ENCODE measurements at regions of chr17 and their contacts with region 1.

Region 1: DNA sequence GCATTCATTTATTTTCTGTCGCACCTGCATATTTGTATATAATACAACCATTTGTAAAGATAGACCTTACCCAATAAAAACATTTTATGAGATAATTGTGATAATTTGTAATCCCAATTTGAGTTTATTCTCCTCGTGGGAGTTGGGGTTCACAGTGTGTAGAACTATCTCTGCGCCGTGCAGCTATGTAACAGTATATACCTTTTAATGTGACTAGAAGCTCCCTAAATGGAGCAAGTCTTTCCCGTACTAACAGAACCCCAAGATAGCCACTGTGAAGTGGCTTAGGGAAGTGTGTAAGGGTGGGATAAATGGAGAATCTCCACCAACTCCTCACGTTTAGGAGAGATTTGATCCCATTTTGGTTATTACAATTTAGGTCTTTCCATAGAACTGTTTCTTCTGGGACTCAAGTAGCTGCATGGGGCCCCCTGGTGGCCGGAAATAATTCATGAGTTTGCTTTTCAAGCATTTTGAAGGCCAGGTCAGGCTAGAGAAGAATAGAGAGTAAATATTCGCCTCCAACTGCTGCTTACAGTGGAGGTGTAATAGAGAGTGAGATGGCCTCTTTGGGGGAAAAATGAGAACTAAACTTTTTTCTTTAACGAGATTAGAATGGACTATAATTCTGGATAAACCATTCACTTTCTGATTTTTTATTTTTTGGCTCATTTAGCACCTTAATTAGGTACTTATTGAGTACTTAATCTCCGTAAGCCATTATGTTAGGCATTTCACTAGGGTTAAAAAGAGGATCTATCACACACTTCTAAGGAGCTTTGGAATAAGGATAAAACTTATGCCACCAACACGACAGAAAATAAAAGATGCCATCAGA is 4.5 kb downstream of the TMEM100 start:
- DNase-seq: peak; percentile 38 to 54 (median 39)
- H3K4me3 ChIP-seq: no peak overlapping the region
- H3K4me3 Mint-ChIP-seq: no peak overlapping the region
- H3K27ac ChIP-seq: no peak overlapping the region
- H3K27ac Mint-ChIP-seq: no peak overlapping the region
- H3K4me1 ChIP-seq: no peaks in the 10 kb centered on the region
- H3K4me1 Mint-ChIP-seq: no peaks in the 10 kb centered on the region
- H3K27me3 ChIP-seq: no peaks in the 10 kb centered on the region
- H3K27me3 Mint-ChIP-seq: peaks cover 17 to 21% of the 10 kb centered on the region in 2 donors

Region 2: GRCh38 chr17:55341432-55341831 is 376.7 kb before region 1 on chr17:
- CTCF ChIA-PET with region 1: no interaction called
- POLR2A ChIA-PET with region 1: no interaction called
- intact Hi-C with region 1: no loop called
- DNase-seq: no peak
- H3K4me3 ChIP-seq: no peak overlapping the region
- H3K4me3 Mint-ChIP-seq: no peak overlapping the region
- H3K27ac ChIP-seq: no peak overlapping the region
- H3K27ac Mint-ChIP-seq: peak overlapping the region in 2 of 7 donors; percentile 37 to 57
- H3K4me1 ChIP-seq: peaks cover 50% of the 10 kb centered on the region
- H3K4me1 Mint-ChIP-seq: peaks cover 38 to 64% (median 47%) of the 10 kb centered on the region in 4 donors
- H3K27me3 ChIP-seq: no peaks in the 10 kb centered on the region
- H3K27me3 Mint-ChIP-seq: peaks cover 0 to 9% of the 10 kb centered on the region in 2 donors

Region 3: DNA sequence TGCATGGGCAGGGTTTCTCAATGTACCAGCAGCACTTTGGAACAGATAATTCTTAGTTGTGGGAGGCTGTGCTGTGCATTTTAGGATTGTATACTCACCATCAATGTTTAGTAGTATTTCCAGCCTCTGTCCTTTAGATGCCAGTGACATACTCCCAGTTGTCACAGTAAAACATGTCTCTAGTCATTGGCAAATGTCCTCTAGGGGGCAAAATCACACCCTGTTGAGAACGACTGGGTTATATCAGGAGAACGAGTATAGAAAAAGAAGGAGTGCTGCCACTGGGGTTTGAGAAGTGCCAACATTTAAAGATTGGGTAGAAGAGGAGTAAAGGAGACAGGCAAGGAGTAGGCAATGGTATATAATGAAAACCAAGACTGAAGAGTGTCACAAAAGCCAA is 169.0 kb before region 1 on chr17:
- CTCF ChIA-PET with region 1: no interaction called
- POLR2A ChIA-PET with region 1: no interaction called
- intact Hi-C with region 1: loop called (anchors 5 kb)
- DNase-seq: peak in 1 of 5 donors; percentile 5
- H3K4me3 ChIP-seq: no peak overlapping the region
- H3K4me3 Mint-ChIP-seq: no peak overlapping the region
- H3K27ac ChIP-seq: no peak overlapping the region
- H3K27ac Mint-ChIP-seq: no peak overlapping the region
- H3K4me1 ChIP-seq: no peaks in the 10 kb centered on the region
- H3K4me1 Mint-ChIP-seq: peaks cover 0 to 1% (median 0%) of the 10 kb centered on the region in 4 donors
- H3K27me3 ChIP-seq: no peaks in the 10 kb centered on the region
- H3K27me3 Mint-ChIP-seq: peaks cover 4 to 12% of the 10 kb centered on the region in 2 donors

Region 4: DNA sequence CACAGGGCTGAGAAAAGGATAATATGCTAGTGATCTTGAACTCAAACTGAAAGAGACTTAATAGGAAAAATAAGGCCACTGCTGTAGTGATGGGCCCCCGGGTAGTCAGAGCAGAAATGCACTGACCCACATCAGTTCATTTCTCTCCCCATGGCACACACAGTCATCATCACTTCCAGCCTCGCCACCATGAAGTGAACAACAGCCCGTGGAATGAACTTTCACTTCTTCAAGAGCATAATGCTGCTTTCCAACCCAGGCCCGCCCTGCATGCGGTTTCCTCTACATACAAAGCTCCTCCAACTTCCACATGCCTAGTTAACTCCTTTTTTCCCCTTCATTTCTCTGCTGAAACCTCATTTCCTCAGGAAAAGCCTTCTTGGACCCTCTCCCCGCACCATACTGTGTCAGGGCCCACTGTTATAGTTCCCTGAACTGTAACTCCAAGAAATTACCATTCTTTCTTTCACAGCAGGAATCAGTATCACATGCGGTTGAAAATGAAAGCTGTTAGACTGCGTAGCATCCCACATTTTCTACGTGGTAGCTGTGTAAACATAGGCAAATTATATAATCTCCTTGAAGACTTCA is 141.0 kb before region 1 on chr17:
- CTCF ChIA-PET with region 1: interaction called, 3 read pairs
- POLR2A ChIA-PET with region 1: no interaction called
- intact Hi-C with region 1: loop called (anchors 1 kb)
- DNase-seq: peak; percentile 48 to 67 (median 54)
- H3K4me3 ChIP-seq: peak overlapping the region; percentile 55 to 57
- H3K4me3 Mint-ChIP-seq: no peak overlapping the region
- H3K27ac ChIP-seq: peak overlapping the region; percentile 47
- H3K27ac Mint-ChIP-seq: no peak overlapping the region
- H3K4me1 ChIP-seq: peaks cover 30% of the 10 kb centered on the region
- H3K4me1 Mint-ChIP-seq: peaks cover 8 to 14% (median 9%) of the 10 kb centered on the region in 4 donors
- H3K27me3 ChIP-seq: no peaks in the 10 kb centered on the region
- H3K27me3 Mint-ChIP-seq: no peaks in the 10 kb centered on the region

Region 5: DNA sequence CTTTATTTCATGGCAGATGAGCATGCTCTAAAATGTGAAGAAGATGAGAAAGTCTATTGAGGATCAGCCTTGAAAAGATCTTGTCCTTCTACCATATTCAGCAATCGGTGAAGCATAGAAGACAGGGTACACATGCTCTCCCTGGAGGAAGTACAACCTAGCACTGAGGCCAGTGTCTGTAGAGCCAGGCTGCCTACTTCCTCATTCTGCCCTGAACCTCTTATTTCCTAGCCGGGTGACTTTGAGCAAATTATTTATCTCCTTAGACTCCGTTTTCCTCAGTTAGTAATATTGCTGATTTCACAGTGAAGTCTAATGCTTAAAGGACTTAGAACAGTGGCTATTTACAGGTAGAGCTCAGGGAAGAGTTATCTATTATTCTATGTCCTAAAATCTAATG is 53.8 kb before region 1 on chr17:
- CTCF ChIA-PET with region 1: no interaction called
- POLR2A ChIA-PET with region 1: no interaction called
- intact Hi-C with region 1: no loop called
- DNase-seq: no peak
- H3K4me3 ChIP-seq: no peak overlapping the region
- H3K4me3 Mint-ChIP-seq: no peak overlapping the region
- H3K27ac ChIP-seq: no peak overlapping the region
- H3K27ac Mint-ChIP-seq: no peak overlapping the region
- H3K4me1 ChIP-seq: no peaks in the 10 kb centered on the region
- H3K4me1 Mint-ChIP-seq: no peaks in the 10 kb centered on the region
- H3K27me3 ChIP-seq: no peaks in the 10 kb centered on the region
- H3K27me3 Mint-ChIP-seq: peaks cover 14 to 32% of the 10 kb centered on the region in 2 donors

Region 6: DNA sequence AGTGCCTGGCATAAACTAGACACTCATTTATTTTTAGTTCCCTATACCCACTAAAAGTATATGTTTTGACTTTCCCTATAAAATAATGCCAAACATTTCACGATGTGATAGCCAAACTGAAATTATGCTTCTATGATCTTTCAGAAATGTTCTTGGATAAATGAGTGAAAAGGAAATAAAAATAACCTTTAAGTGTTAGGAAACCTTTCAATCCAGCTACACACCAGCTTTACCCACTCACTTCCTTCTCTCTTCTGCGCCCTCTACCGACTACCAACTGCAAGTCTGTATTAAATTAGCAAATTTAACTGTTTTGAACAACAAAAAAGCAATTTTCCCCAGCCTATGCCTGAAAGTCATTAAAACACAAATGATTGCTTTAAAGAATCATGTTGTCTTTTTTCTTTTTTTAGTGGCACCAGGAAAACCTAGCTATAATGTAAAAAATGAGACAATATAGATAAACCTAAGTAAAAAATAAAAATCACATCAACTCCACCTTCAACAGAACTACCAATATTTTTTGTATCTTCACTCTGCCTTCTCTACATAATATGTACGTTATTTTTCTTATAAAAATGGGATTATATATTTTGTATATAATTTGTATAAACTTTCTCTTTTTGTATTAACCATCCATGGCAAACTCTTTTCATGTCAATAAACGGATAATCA is 17.8 kb after region 1 on chr17:
- CTCF ChIA-PET with region 1: interaction called, 21 read pairs
- POLR2A ChIA-PET with region 1: no interaction called
- intact Hi-C with region 1: no loop called
- DNase-seq: peak; percentile 17 to 38 (median 25)
- H3K4me3 ChIP-seq: no peak overlapping the region
- H3K4me3 Mint-ChIP-seq: no peak overlapping the region
- H3K27ac ChIP-seq: no peak overlapping the region
- H3K27ac Mint-ChIP-seq: peak overlapping the region in 1 of 7 donors; percentile 11
- H3K4me1 ChIP-seq: no peaks in the 10 kb centered on the region
- H3K4me1 Mint-ChIP-seq: no peaks in the 10 kb centered on the region
- H3K27me3 ChIP-seq: no peaks in the 10 kb centered on the region
- H3K27me3 Mint-ChIP-seq: peaks cover 11 to 19% of the 10 kb centered on the region in 2 donors